Right lobe of liver (tissue), 6 donors: ENCODE measurements at regions of chr20 and their contacts with region 1.

Region 1: GRCh38 chr20:50575847-50576720 is 65.9 kb downstream of the PTPN1 start:
- DNase-seq: peak; percentile 76 to 83 (median 83)
- ATAC-seq: peak; percentile 68 to 76 (median 69)
- H3K4me3 ChIP-seq: no peak overlapping the region
- H3K27ac ChIP-seq: peak overlapping the region in 2 of 3 donors; percentile 0 to 50
- H3K4me1 ChIP-seq: peaks cover 0 to 46% (median 14%) of the 10 kb centered on the region in 4 donors
- H3K27me3 ChIP-seq: no peaks in the 10 kb centered on the region
- CTCF ChIP-seq: peak; percentile 79 to 88 (median 82)
- POLR2A ChIP-seq: no peak

Region 2: GRCh38 chr20:50478162-50479036 is 97.7 kb before region 1 on chr20:
- intact Hi-C with region 1: loop called in 1 of 2 experiments (anchors 10 kb)
- DNase-seq: peak; percentile 62 to 72 (median 70)
- ATAC-seq: peak; percentile 74 to 87 (median 82)
- H3K4me3 ChIP-seq: no peak overlapping the region
- H3K27ac ChIP-seq: no peak overlapping the region
- H3K4me1 ChIP-seq: peaks cover 0 to 11% (median 6%) of the 10 kb centered on the region in 4 donors
- H3K27me3 ChIP-seq: no peaks in the 10 kb centered on the region
- CTCF ChIP-seq: peak; percentile 48 to 57 (median 54)
- POLR2A ChIP-seq: no peak

Region 3: DNA sequence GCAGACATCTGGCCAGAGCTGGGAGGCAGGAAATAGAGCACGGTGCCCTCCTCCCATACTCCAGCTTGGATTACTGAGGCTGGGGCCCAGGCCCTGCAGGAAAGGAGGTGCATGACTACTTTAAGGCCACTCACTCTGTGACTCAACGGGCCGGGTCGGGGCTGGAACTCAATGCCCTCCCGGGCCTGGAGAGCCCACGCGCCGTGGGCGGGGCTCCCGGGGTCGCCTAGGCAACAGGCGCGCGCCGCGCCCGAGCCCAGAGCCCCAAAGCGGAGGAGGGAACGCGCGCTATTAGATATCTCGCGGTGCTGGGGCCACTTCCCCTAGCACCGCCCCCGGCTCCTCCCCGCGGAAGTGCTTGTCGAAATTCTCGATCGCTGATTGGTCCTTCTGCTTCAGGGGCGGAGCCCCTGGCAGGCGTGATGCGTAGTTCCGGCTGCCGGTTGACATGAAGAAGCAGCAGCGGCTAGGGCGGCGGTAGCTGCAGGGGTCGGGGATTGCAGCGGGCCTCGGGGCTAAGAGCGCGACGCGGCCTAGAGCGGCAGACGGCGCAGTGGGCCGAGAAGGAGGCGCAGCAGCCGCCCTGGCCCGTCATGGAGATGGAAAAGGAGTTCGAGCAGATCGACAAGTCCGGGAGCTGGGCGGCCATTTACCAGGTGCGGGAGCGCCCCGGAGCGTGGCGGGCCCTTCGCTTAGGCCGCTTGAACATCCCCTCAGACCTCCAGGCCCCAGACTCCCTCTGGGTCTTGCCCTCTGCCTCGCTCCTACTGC is 66.0 kb before region 1 on chr20 and contains the start of gene PTPN1:
- intact Hi-C with region 1: loop called in 1 of 2 experiments (anchors 10 kb)
- DNase-seq: peak; percentile 98 to 99 (median 99)
- ATAC-seq: peak; percentile 95 to 99 (median 98)
- H3K4me3 ChIP-seq: peak within 1 kb of the TSS; percentile 78 to 93 (median 78)
- H3K27ac ChIP-seq: peak within 1 kb of the TSS; percentile 73 to 90 (median 87)
- H3K4me1 ChIP-seq: peaks cover 0 to 36% (median 18%) of the 10 kb centered on the region in 4 donors
- H3K27me3 ChIP-seq: no peaks in the 10 kb centered on the region
- CTCF ChIP-seq: peak in 1 of 4 donors; percentile 33
- POLR2A ChIP-seq: peak; percentile 99
- total RNA-seq, gene PTPN1: 9.5 to 14.9 (median 12.6) TPM

Region 4: GRCh38 chr20:50765674-50766073 is 189.6 kb after region 1 on chr20:
- intact Hi-C with region 1: no loop called
- DNase-seq: no peak
- ATAC-seq: no peak
- H3K4me3 ChIP-seq: no peak overlapping the region
- H3K27ac ChIP-seq: no peak overlapping the region
- H3K4me1 ChIP-seq: peaks cover 0 to 26% (median 13%) of the 10 kb centered on the region in 4 donors
- H3K27me3 ChIP-seq: no peaks in the 10 kb centered on the region
- CTCF ChIP-seq: no peak
- POLR2A ChIP-seq: no peak

Region 5: GRCh38 chr20:50776122-50776817 is 200.2 kb after region 1 on chr20:
- intact Hi-C with region 1: no loop called
- DNase-seq: peak in 1 of 3 donors; percentile 16
- ATAC-seq: no peak
- H3K4me3 ChIP-seq: no peak overlapping the region
- H3K27ac ChIP-seq: no peak overlapping the region
- H3K4me1 ChIP-seq: no peaks in the 10 kb centered on the region
- H3K27me3 ChIP-seq: no peaks in the 10 kb centered on the region
- CTCF ChIP-seq: no peak
- POLR2A ChIP-seq: no peak